GM12878 (cell line): ENCODE measurements at regions of chr2 and their contacts with region 1.

Region 1: DNA sequence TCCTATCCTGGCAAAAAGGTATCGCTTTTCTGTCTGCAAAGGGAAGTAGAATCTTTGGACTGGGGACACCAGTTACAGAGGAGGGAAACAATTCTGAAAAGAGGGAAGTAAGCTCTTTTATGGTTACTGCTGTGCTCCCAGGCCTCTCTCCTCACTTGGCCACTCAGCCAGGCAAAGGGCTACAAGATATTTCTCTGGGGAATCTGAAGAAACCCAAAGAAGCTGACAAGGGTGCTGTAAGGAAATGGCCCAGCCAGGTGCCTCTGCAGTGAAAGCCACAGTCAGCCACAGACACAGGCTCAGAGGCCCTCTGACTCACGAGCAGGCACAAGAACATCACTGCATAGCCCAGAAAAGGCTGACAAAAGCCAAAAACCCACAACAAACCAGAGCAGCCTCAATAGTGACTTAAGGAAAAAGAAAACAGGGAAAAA is 5.8 kb downstream of the HDLBP start:
- DNase-seq: peak; percentile 74
- ATAC-seq: peak; percentile 71
- H3K4me3 ChIP-seq: peak overlapping the region; percentile 64; the same call in 1 of the 2 replicates
- H3K27ac ChIP-seq: peak overlapping the region; percentile 75
- H3K4me1 ChIP-seq: peaks cover 40% of the 10 kb centered on the region
- H3K27me3 ChIP-seq: no peaks in the 10 kb centered on the region
- CTCF ChIP-seq: no peak
- EP300 ChIP-seq: peak; percentile 38 to 81; a peak in 1 of 4 replicates
- POLR2A ChIP-seq: 0 out of 2 replicates have a peak, but pooled peaks have one; percentile 35
- RAD21 ChIP-seq: no peak

Region 2: DNA sequence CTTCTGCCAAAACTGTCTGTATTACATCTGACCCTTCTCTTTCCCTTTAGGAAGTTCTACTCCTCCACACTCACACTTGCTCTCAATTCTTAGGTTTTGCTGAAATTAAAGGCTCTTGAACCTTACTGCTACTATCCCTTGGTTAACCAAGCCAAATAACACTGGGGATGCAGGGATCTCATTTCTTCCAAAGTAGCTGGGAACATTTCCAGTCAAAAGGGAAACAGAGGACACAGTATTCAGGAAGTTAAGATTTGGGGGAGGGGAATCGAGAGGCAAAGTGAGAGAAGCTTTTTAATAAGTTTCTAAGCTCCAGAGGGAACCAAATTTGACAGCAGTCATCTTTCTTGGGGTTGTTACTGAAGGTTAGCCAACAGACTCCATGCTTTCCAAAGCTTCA is 12.2 kb after region 1 on chr2:
- CTCF ChIA-PET with region 1: interaction called, 4 read pairs
- POLR2A ChIA-PET with region 1: interaction called, 20 read pairs
- RAD21 ChIA-PET with region 1: interaction called, 9 read pairs
- SMC1A ChIA-PET with region 1: interaction called, 14 read pairs
- in situ Hi-C with region 1: no loop called
- intact Hi-C with region 1: no loop called
- DNase-seq: no peak
- ATAC-seq: no peak
- H3K4me3 ChIP-seq: peak overlapping the region; percentile 44
- H3K27ac ChIP-seq: peak overlapping the region; percentile 14; the same call in 1 of the 2 replicates
- H3K4me1 ChIP-seq: peaks cover 29% of the 10 kb centered on the region
- H3K27me3 ChIP-seq: no peaks in the 10 kb centered on the region
- CTCF ChIP-seq: no peak
- EP300 ChIP-seq: no peak
- POLR2A ChIP-seq: no peak
- RAD21 ChIP-seq: no peak

Region 3: GRCh38 chr2:241339839-241340630 is 30.3 kb after region 1 on chr2:
- CTCF ChIA-PET with region 1: no interaction called
- POLR2A ChIA-PET with region 1: interaction called, 3 read pairs
- RAD21 ChIA-PET with region 1: no interaction called
- SMC1A ChIA-PET with region 1: interaction called, 4 read pairs
- in situ Hi-C with region 1: no loop called
- intact Hi-C with region 1: loop called (anchors 1 kb)
- DNase-seq: no peak
- ATAC-seq: no peak
- H3K4me3 ChIP-seq: no peak overlapping the region
- H3K27ac ChIP-seq: no peak overlapping the region
- H3K4me1 ChIP-seq: peaks cover 14% of the 10 kb centered on the region
- H3K27me3 ChIP-seq: no peaks in the 10 kb centered on the region
- CTCF ChIP-seq: no peak
- EP300 ChIP-seq: no peak
- POLR2A ChIP-seq: no peak
- RAD21 ChIP-seq: no peak